CD4-positive, alpha-beta memory T cell (primary cell): ENCODE measurements at regions of chrX and their contacts with region 1.

Region 1: GRCh38 chrX:150568320-150569154 is at the start of gene MTM1:
- DNase-seq: peak; percentile 90 to 92 (median 92)
- H3K4me3 ChIP-seq: peak within 1 kb of the TSS; percentile 31 to 64
- H3K4me3 Mint-ChIP-seq: peak within 1 kb of the TSS; percentile 85 to 90 (median 88)
- H3K27ac ChIP-seq: peak within 1 kb of the TSS; percentile 78
- H3K27ac Mint-ChIP-seq: peak within 1 kb of the TSS; percentile 82 to 100 (median 87)
- H3K4me1 ChIP-seq: peaks cover 41% of the 10 kb centered on the region
- H3K4me1 Mint-ChIP-seq: peaks cover 26 to 49% (median 36%) of the 10 kb centered on the region in 4 donors
- H3K27me3 ChIP-seq: no peaks in the 10 kb centered on the region
- H3K27me3 Mint-ChIP-seq: no peaks in the 10 kb centered on the region
- total RNA-seq, gene MTM1: 37.7 to 38.5 TPM

Region 2: GRCh38 chrX:149938427-149939270 is 629.9 kb before region 1 on chrX and contains the start of gene EOLA2:
- CTCF ChIA-PET with region 1: interaction called, 5 read pairs
- POLR2A ChIA-PET with region 1: interaction called, 23 read pairs
- intact Hi-C with region 1: no loop called
- DNase-seq: peak; percentile 89 to 97 (median 95)
- H3K4me3 ChIP-seq: peak within 1 kb of the TSS; percentile 22 to 66
- H3K4me3 Mint-ChIP-seq: peak within 1 kb of the TSS; percentile 80 to 97 (median 93)
- H3K27ac ChIP-seq: peak within 1 kb of the TSS; percentile 90
- H3K27ac Mint-ChIP-seq: peak within 1 kb of the TSS; percentile 93 to 100 (median 99)
- H3K4me1 ChIP-seq: peaks cover 11% of the 10 kb centered on the region
- H3K4me1 Mint-ChIP-seq: peaks cover 3 to 16% (median 8%) of the 10 kb centered on the region in 4 donors
- H3K27me3 ChIP-seq: no peaks in the 10 kb centered on the region
- H3K27me3 Mint-ChIP-seq: no peaks in the 10 kb centered on the region
- total RNA-seq, gene EOLA2: 38.1 to 41.1 TPM

Region 3: GRCh38 chrX:150146269-150146896 is 422.2 kb before region 1 on chrX:
- CTCF ChIA-PET with region 1: no interaction called
- POLR2A ChIA-PET with region 1: no interaction called
- intact Hi-C with region 1: no loop called
- DNase-seq: no peak
- H3K4me3 ChIP-seq: no peak overlapping the region
- H3K4me3 Mint-ChIP-seq: no peak overlapping the region
- H3K27ac ChIP-seq: no peak overlapping the region
- H3K27ac Mint-ChIP-seq: no peak overlapping the region
- H3K4me1 ChIP-seq: no peaks in the 10 kb centered on the region
- H3K4me1 Mint-ChIP-seq: no peaks in the 10 kb centered on the region
- H3K27me3 ChIP-seq: no peaks in the 10 kb centered on the region
- H3K27me3 Mint-ChIP-seq: peaks cover 0 to 2% of the 10 kb centered on the region in 2 donors

Region 4: GRCh38 chrX:150547375-150548115 is 21.0 kb before region 1 on chrX:
- CTCF ChIA-PET with region 1: interaction called, 4 read pairs
- POLR2A ChIA-PET with region 1: interaction called, 67 read pairs
- intact Hi-C with region 1: loop called (anchors 1 kb)
- DNase-seq: no peak
- H3K4me3 ChIP-seq: peak overlapping the region in 1 of 2 donors; percentile 35
- H3K4me3 Mint-ChIP-seq: peak overlapping the region; percentile 57 to 87 (median 79)
- H3K27ac ChIP-seq: no peak overlapping the region
- H3K27ac Mint-ChIP-seq: peak overlapping the region; percentile 37 to 93 (median 81)
- H3K4me1 ChIP-seq: peaks cover 30% of the 10 kb centered on the region
- H3K4me1 Mint-ChIP-seq: peaks cover 11 to 30% (median 19%) of the 10 kb centered on the region in 4 donors
- H3K27me3 ChIP-seq: no peaks in the 10 kb centered on the region
- H3K27me3 Mint-ChIP-seq: no peaks in the 10 kb centered on the region

Region 5: GRCh38 chrX:150587585-150588503 is 19.3 kb after region 1 on chrX:
- CTCF ChIA-PET with region 1: interaction called, 21 read pairs
- POLR2A ChIA-PET with region 1: interaction called, 3 read pairs
- intact Hi-C with region 1: loop called (anchors 1 kb)
- DNase-seq: peak in 4 of 5 donors; percentile 25 to 40 (median 32)
- H3K4me3 ChIP-seq: no peak overlapping the region
- H3K4me3 Mint-ChIP-seq: no peak overlapping the region
- H3K27ac ChIP-seq: no peak overlapping the region
- H3K27ac Mint-ChIP-seq: peak overlapping the region in 2 of 7 donors; percentile 17 to 71
- H3K4me1 ChIP-seq: peaks cover 4% of the 10 kb centered on the region
- H3K4me1 Mint-ChIP-seq: peaks cover 10 to 35% (median 29%) of the 10 kb centered on the region in 4 donors
- H3K27me3 ChIP-seq: no peaks in the 10 kb centered on the region
- H3K27me3 Mint-ChIP-seq: no peaks in the 10 kb centered on the region

Region 6: DNA sequence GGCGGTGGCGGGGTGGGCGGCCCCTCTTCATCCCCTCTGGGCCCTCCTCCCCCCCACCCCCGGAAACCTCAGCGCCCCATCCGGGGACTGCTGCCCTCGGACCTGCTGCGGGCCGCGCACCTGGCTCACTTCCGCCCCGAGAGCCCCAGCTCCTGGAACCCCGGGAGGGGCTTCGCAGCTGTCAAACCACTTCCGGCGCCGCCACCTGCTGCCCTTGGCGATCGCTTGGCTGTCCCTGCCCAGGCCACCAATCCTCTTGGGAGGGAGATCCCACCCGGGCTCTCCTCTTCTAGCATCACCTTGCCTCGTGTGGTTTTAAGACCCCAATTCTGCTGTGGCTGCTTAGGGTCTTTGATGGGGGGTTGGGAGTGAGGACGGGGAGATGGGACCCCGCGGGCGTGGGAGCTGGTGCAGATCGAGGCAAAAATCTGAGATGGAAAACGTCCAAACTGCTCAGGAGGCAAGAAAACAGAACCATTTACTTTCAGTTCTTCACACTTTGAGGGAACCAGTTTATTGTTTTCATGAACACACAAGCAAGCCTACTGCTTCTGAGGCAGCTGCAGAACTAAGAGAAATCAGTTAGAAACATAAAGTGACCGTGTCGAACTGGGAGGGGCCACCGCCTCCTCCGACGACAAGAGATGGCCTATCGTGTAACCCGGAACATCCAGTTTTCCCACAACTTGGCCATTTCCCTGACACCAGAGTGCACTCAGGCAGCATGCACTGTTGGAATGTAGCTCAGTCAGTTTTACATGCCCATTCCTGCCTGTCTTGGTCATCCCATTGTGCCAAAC is 125.4 kb after region 1 on chrX:
- CTCF ChIA-PET with region 1: no interaction called
- POLR2A ChIA-PET with region 1: interaction called, 22 read pairs
- intact Hi-C with region 1: loop called (anchors 2 kb)
- DNase-seq: peak; percentile 53 to 78 (median 61)
- H3K4me3 ChIP-seq: peak overlapping the region; percentile 47 to 61
- H3K4me3 Mint-ChIP-seq: peak overlapping the region; percentile 93 to 98 (median 95)
- H3K27ac ChIP-seq: peak overlapping the region; percentile 71
- H3K27ac Mint-ChIP-seq: peak overlapping the region; percentile 95 to 99 (median 98)
- H3K4me1 ChIP-seq: peaks cover 73% of the 10 kb centered on the region
- H3K4me1 Mint-ChIP-seq: peaks cover 39 to 74% (median 61%) of the 10 kb centered on the region in 4 donors
- H3K27me3 ChIP-seq: no peaks in the 10 kb centered on the region
- H3K27me3 Mint-ChIP-seq: no peaks in the 10 kb centered on the region

Region 7: DNA sequence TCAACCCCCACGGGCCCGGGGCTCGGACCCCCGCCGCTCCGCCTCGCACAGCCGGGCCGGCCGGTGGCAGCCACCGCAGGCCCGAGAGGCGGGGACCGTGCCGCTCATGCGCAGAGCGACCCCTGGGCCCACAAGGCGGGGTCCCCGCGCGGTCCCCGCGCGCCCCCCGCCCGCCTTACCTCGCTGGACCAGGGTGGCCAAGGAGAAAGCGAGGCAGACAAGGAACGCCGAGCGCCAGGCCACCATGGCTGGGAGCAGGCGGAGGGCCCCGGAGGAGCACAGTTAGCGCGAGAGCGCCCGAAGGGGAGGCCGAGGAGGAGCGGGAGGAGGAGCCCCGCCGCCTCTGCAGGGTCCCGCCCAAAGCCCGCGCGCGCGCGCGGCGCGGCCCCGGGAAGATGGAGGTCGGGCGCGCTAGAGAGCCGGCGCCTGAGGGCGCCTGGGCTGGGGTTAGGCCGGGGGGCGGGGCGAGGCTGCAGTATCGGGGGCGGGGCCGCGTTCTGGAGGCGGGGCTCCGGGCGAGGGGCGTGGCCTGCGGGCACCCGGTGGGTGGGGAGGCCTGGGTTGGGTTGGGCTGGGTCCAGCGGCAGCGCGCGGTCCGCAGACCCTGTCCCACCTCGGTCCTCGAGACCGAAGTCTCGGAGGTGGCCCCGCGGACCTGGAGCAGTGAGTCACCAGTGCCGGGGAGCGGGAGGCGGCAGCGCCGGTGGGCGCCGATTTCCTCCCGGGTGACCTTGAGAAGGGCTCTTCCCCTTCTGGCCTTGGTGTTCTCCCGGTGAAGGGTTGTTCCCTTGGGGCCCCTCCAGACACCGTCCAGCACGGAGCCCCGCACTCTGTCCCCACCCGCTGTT is 330.0 kb after region 1 on chrX and contains the start of gene CD99L2:
- CTCF ChIA-PET with region 1: no interaction called
- POLR2A ChIA-PET with region 1: no interaction called
- intact Hi-C with region 1: loop called (anchors 5 kb)
- DNase-seq: peak; percentile 85 to 86 (median 86)
- H3K4me3 ChIP-seq: peak within 1 kb of the TSS; percentile 47 to 56
- H3K4me3 Mint-ChIP-seq: peak within 1 kb of the TSS; percentile 87 to 95 (median 91)
- H3K27ac ChIP-seq: peak within 1 kb of the TSS; percentile 66
- H3K27ac Mint-ChIP-seq: peak within 1 kb of the TSS; percentile 53 to 94 (median 84)
- H3K4me1 ChIP-seq: peaks cover 9% of the 10 kb centered on the region
- H3K4me1 Mint-ChIP-seq: peaks cover 3 to 16% (median 5%) of the 10 kb centered on the region in 4 donors
- H3K27me3 ChIP-seq: no peaks in the 10 kb centered on the region
- H3K27me3 Mint-ChIP-seq: no peaks in the 10 kb centered on the region
- total RNA-seq, gene CD99L2: 15.5 to 17.3 TPM